ENCODE measurements at regions of chr5 and their contacts with region 1.

Region 1: DNA sequence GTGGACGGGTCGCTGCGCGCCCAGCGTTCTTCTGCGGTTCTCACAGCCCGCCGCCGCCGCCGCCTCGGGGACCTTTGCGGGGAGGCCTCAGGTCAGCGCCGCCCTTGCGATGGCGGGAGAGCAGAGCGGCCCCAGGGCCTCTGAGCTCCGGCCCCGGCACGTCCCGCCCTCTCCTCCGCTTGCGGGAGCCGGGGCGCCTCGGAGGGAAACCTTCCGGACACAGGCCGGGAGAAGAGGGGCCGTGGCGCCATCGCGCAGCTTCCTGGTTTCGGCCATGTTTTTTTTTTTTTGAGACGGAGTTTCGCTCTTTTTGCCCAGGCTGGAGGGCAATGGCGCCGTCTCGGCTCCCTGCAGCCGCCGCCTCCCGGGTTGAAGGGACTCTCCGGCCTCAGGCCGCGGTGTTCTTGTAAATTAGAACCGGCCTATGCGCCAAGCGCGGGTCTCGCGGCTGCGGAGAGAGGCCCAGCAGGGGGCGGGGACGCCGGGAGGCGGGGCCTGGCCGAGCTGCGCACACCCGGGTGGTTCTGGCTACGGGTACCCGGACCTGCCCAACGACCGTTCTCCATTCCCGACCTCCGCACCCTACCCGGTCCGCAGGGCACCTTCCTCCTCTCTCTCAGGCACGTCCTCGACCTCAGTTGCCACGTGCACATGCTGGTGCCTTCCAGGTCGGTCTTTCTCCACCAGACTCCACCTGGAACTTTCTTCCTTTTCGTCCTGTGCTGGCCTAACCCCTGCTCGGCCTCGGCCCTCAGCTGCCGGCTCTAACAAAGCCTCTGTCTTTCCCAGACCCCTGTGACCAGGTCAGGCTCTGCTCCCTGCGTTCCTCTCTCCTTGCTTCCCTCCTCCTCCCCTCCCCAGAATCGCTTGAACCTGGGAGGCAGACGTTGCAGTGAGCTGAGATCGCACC is 28.8 kb upstream of the MGAT1 start:
- DNase-seq: peak; percentile 95

Region 2: DNA sequence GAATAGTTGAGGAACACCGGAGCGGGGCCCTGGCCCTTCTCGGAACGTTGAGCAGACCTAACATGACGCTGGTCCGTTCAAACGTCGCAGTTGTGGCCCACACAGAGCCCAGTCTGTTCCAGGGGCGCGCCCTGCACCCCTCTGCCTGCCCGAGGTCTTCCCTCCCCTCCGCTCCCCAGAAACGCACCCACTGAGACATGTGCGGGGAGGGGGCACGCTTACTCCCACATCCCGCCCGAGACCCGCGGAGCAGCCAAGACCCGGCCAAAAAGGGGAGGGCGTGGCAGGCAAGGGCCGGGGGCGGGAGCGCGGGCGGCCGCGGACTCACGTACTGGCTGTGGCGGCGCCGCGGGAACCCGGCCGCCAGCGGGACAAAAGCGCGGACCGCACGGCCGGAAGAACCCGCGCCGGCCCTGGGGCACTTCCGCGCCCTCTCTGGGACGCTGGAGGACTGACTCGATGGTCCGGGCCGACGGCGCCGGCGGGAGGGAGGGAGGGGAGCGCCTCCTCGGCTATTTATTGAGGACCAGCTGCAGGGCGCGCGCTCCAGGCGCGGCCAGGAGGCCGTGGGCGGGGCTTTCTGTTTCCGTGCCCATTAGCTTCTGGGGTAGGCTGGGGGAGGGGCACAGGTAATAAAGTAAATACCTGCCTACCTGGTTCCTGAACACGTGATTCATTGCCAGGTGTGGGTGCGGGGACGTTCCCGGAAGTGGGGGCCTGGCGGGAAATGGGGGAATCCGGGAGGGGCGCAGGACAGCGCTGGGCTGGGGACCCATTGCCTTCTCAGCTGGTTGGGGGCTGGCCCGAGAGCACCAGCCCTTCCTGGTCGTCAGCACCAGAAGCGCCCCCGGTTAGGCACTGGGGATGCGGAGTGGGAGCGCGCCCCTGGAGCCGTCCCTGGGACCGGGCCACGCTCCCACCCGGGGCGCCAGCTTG is 29.8 kb after region 1 on chr5 and contains the start of gene ZFP62:
- intact Hi-C with region 1: loop called in 1 of 2 experiments (anchors 2 kb)
- DNase-seq: peak; percentile 97
- total RNA-seq, gene ZFP62: 21.2 to 22.2 TPM

Region 3: DNA sequence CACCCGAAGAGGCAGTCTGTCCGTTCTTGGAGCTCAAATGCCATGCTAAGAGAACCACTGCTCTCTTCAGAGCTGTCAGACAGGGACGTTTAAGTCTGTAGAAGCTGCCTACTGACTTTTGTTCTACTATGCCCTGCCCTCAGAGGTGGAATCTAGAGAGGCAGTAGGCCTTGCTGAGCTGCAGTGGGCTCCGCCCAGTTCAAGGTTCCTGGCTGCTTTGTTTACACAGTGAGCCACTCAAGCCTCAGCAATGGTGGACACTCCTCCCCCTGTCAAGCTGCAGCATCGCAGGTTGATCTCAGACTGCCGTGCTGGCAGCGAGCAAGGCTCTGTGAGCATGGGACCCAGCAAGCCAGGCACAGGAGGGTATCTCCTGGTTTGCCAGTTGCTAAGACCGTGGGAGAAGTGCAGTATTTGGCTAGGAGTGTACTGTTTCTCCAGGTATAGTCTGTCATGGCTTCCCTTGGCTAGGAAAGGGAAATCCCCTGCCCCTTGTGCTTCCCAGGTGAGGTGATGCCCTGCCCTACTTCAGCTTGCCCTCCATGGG is 54.6 kb after region 1 on chr5:
- intact Hi-C with region 1: no loop called
- DNase-seq: no peak